ENCODE measurements at regions of chr5 and their contacts with region 1.

Region 1: DNA sequence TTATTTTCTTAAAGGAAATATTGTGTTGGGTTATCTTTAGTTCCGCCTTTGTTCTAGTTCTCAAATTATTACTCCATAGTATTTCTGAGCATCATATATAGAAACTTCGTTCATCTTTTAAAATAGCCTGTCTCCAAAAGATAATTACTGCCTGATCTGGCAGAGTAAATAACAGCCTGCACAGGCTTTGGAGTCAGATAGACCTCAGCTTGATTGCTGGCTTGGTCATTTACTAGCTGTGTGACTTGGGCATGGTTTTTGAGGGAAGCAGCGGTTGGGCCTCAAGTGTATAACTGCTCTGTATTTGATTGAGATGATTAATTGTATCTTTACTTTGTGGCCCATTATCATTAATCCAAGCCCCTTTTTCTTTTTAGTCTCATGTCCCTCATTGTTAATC is 50.1 kb downstream of the FBXO38 start:
- DNase-seq: no peak
- H3K4me3 ChIP-seq: no peak overlapping the region
- H3K27ac ChIP-seq: no peak overlapping the region
- H3K4me1 ChIP-seq: no peaks in the 10 kb centered on the region
- CTCF ChIP-seq: no peak

Region 2: GRCh38 chr5:148145916-148146315 is 287.9 kb before region 1 on chr5:
- CTCF ChIA-PET with region 1: no interaction called
- POLR2A ChIA-PET with region 1: no interaction called
- intact Hi-C with region 1: no loop called
- DNase-seq: no peak
- H3K4me3 ChIP-seq: no peak overlapping the region
- H3K27ac ChIP-seq: no peak overlapping the region
- H3K4me1 ChIP-seq: no peaks in the 10 kb centered on the region
- CTCF ChIP-seq: no peak

Region 3: DNA sequence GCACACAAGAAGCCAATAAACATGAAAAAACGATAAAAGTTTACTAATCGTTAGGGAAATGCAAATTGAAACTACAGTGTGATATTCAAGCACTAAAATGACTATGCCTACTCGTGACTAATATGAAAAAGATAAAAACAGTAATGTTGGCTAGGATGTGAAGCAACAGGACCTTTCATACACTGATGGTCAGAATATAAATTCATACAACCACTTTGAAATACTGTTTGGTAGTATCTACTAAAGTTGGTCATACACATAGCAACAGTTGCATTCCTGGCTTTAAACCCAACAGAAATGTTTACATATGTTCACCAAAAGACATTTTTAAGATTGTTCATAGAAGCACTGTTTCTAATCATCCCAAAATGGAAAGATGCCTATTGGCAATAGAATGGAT is 25.7 kb before region 1 on chr5:
- CTCF ChIA-PET with region 1: no interaction called
- POLR2A ChIA-PET with region 1: interaction called, 3 read pairs
- intact Hi-C with region 1: loop called (anchors 2 kb)
- DNase-seq: no peak
- H3K4me3 ChIP-seq: no peak overlapping the region
- H3K27ac ChIP-seq: no peak overlapping the region
- H3K4me1 ChIP-seq: peaks cover 11% of the 10 kb centered on the region
- CTCF ChIP-seq: no peak

Measured in OCI-LY7 (cell line).